Calu3 (cell line): ENCODE measurements at regions of chr11 and their contacts with region 1.

Region 1: DNA sequence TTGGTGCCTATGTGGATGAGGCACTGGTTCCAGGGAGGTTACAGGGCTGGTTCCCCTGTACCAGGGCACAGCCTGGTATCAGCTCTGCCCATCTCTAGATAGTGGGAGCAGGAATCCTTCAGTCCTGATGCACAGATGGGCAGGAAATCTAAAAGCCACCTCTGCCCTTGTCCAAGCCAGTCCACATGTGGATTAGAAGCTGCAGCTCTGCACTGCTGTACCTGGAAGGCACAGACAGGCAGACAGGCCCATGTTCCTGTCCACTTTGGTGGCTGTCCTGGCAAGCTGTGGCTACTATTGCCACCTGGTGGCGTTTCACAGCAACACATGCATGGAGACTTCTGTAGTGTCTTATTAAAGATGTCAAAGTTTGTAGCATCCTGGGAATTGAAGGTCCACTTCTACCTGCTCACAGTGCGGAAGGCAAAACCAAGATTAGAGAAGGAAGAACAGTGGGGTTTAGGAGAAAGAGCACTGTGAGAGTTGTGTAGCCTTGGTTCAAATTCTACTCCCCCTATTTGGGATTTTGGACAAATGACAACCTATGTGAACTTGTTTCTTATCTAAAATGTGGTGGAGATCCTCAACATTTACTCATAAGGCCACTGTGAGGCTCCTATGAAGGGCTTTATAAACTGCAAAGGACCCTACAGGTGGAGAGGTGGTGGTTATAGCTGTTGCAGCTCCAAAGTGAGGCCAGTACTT is 30.1 kb downstream of the NAV2 start:
- DNase-seq: peak; percentile 81
- H3K4me3 Mint-ChIP-seq: no peak overlapping the region
- H3K27ac Mint-ChIP-seq: no peak overlapping the region
- H3K4me1 Mint-ChIP-seq: peaks cover 31% of the 10 kb centered on the region
- H3K27me3 Mint-ChIP-seq: no peaks in the 10 kb centered on the region
- CTCF ChIP-seq: peak; percentile 92

Region 2: DNA sequence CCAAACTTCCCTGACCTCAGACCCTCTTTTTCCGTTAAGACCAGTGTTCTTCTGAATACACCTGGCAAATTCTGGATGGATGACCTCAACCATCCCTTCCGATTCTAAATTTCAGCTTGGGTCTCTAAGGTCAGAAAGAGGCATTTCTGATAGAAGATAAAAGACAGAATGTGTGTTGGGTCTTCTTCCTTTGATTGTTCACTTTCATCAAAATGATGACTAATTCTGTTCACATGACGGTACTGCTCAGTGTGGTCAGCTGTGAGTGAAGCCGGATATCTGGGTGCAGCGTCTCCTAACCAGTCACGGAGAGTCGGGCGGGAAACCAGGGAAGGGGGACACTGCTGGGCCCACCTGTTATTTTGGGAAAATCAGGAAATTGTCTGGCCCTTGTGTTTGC is 181.7 kb before region 1 on chr11:
- CTCF ChIA-PET with region 1: interaction called, 22 read pairs
- intact Hi-C with region 1: loop called (anchors 1 kb)
- DNase-seq: no peak
- H3K4me3 Mint-ChIP-seq: no peak overlapping the region
- H3K27ac Mint-ChIP-seq: no peak overlapping the region
- H3K4me1 Mint-ChIP-seq: peaks cover 8% of the 10 kb centered on the region
- H3K27me3 Mint-ChIP-seq: peaks cover 43% of the 10 kb centered on the region
- CTCF ChIP-seq: no peak

Region 3: GRCh38 chr11:19660076-19660475 is 82.7 kb before region 1 on chr11:
- CTCF ChIA-PET with region 1: no interaction called
- intact Hi-C with region 1: no loop called
- DNase-seq: peak; percentile 77
- H3K4me3 Mint-ChIP-seq: no peak overlapping the region
- H3K27ac Mint-ChIP-seq: peak overlapping the region; percentile 66
- H3K4me1 Mint-ChIP-seq: peaks cover 37% of the 10 kb centered on the region
- H3K27me3 Mint-ChIP-seq: no peaks in the 10 kb centered on the region
- CTCF ChIP-seq: no peak

Region 4: DNA sequence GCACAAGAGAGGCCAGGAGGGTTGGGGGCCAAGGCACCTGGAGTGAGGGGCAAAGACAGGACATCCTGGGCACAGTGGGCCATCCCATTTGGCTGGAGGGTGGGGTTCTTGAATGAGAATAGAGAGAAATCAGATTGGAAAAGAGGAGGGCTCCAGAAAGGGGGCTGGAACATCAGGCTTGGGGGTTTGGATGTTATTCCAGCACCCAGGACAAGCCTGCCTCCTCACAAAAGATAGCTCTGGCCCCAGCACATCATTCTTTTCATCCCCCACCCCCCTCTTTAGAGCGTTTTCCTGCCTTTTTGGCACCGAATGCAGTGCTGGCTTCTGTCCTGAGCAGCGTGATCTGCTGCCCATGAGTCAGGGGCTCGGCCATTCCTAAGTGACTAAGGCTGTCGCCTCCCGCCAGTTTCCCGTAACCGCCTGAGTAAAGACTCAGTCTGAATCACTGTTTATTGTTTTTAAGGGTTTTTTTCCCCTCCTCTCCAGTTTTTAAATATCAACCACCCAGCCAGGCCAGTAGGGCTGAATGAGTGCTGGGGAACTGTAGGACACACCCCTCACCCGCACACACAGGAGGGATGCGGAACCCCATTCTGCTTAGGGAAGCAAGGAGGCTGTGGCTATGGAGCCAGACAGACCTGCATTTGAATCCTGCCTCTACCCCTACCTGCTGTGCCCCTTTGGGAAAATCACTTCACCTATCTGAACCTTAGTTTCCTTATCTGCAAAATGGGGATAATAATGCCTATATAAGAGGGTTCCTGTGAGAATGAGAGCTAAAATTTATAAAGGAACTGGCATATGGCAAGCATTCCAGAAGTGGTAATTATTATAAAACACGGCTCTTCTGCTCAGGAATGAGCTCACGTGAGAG is 62.5 kb before region 1 on chr11:
- CTCF ChIA-PET with region 1: no interaction called
- intact Hi-C with region 1: loop called (anchors 5 kb)
- DNase-seq: peak; percentile 81
- H3K4me3 Mint-ChIP-seq: peak overlapping the region; percentile 36
- H3K27ac Mint-ChIP-seq: peak overlapping the region; percentile 78
- H3K4me1 Mint-ChIP-seq: peaks cover 21% of the 10 kb centered on the region
- H3K27me3 Mint-ChIP-seq: no peaks in the 10 kb centered on the region
- CTCF ChIP-seq: no peak

Region 5: GRCh38 chr11:19800162-19800561 is 57.4 kb after region 1 on chr11:
- CTCF ChIA-PET with region 1: no interaction called
- intact Hi-C with region 1: loop called (anchors 2 kb)
- DNase-seq: no peak
- H3K4me3 Mint-ChIP-seq: no peak overlapping the region
- H3K27ac Mint-ChIP-seq: peak overlapping the region; percentile 10
- H3K4me1 Mint-ChIP-seq: peaks cover 44% of the 10 kb centered on the region
- H3K27me3 Mint-ChIP-seq: no peaks in the 10 kb centered on the region
- CTCF ChIP-seq: no peak

Region 6: GRCh38 chr11:19808076-19808911 is 65.6 kb after region 1 on chr11:
- CTCF ChIA-PET with region 1: no interaction called
- intact Hi-C with region 1: loop called (anchors 2 kb)
- DNase-seq: no peak
- H3K4me3 Mint-ChIP-seq: no peak overlapping the region
- H3K27ac Mint-ChIP-seq: no peak overlapping the region
- H3K4me1 Mint-ChIP-seq: peaks cover 54% of the 10 kb centered on the region
- H3K27me3 Mint-ChIP-seq: no peaks in the 10 kb centered on the region
- CTCF ChIP-seq: no peak